Aorta (tissue), 5 donors: ENCODE measurements at regions of chr6 and their contacts with region 1.

Region 1: GRCh38 chr6:3281631-3282475 is 23.1 kb downstream of the PSMG4 start:
- DNase-seq: peak in 1 of 2 donors; percentile 72
- ATAC-seq: no peak
- H3K4me3 ChIP-seq: no peak overlapping the region
- H3K27ac ChIP-seq: peak overlapping the region in 1 of 2 donors; percentile 29
- H3K4me1 ChIP-seq: no peaks in the 10 kb centered on the region
- H3K27me3 ChIP-seq: no peaks in the 10 kb centered on the region

Region 2: GRCh38 chr6:3403238-3404173 is 121.7 kb after region 1 on chr6:
- intact Hi-C with region 1: loop called in 1 of 2 experiments (anchors 10 kb)
- DNase-seq: no peak
- ATAC-seq: no peak
- H3K4me3 ChIP-seq: no peak overlapping the region
- H3K27ac ChIP-seq: no peak overlapping the region
- H3K4me1 ChIP-seq: no peaks in the 10 kb centered on the region
- H3K27me3 ChIP-seq: no peaks in the 10 kb centered on the region

Region 3: GRCh38 chr6:3732345-3733141 is 450.7 kb after region 1 on chr6:
- intact Hi-C with region 1: loop called (anchors 2 to 5 kb)
- DNase-seq: peak; percentile 83 to 88
- ATAC-seq: peak; percentile 84
- H3K4me3 ChIP-seq: no peak overlapping the region
- H3K27ac ChIP-seq: peak overlapping the region in 1 of 2 donors; percentile 34
- H3K4me1 ChIP-seq: no peaks in the 10 kb centered on the region
- H3K27me3 ChIP-seq: no peaks in the 10 kb centered on the region

Region 4: DNA sequence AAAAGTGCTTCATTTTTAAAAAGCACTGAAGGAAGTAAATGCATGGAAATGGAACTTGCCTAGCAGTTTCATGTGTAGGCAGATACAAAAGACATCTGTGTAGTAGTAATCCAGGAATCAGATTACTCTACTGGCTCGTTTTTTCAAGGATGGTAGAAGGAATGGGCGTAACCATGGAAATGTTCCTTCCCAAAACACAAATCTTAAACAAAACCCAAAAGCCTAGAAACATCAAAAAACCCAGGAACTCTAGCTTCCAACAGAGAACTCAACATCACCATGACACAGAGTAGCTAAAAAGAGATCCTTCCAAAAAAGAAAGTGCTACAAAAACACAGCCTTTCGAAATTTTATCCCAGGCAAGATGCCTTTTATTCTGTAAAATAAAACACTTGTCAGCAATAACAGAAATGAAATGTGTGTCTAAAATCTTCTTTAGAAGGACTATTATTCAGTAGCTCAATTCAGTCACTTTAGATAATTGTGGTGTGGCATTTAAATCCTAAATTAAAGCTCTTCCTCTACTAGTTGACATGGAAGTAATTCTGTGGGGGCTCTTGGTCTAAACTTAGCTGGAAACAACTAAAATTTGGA is 715.4 kb after region 1 on chr6:
- intact Hi-C with region 1: loop called (anchors 5 kb)
- DNase-seq: no peak
- ATAC-seq: peak; percentile 41
- H3K4me3 ChIP-seq: no peak overlapping the region
- H3K27ac ChIP-seq: peak overlapping the region in 1 of 2 donors; percentile 43
- H3K4me1 ChIP-seq: peaks cover 0 to 3% of the 10 kb centered on the region in 2 donors
- H3K27me3 ChIP-seq: no peaks in the 10 kb centered on the region

Region 5: DNA sequence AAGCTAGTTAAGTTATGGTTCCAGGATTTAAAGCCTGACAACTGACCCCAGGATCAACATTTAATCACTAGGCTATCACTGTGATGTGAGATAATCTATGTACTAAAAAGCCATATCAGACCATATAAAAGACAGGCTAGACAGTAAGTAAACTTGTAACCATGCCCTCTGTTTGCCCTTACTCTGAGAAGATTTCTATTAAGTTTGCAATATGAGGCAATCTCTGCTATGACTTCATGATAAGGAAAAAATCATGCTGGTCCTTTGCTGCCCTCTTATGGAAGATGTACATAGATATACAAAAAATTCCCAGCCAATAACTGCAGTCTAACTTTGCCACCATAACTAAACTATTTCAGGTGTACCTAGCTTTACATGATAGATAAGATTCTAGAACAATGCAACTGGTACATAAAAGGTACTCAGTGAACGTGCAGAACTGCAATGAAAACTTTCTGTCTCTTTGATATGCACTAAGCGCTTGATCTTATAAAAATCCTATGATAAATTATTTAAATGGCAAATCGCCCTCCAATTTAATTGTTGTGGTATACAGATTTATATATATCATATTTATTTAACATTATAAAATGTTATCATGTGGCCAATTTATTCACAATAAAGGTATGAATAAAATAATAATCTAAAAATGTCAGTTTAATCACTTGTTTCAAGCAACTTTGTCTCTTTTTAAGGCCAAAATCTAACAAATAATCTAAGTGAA is 726.6 kb after region 1 on chr6:
- intact Hi-C with region 1: loop called (anchors 2 to 5 kb)
- DNase-seq: no peak
- ATAC-seq: peak; percentile 86
- H3K4me3 ChIP-seq: no peak overlapping the region
- H3K27ac ChIP-seq: no peak overlapping the region
- H3K4me1 ChIP-seq: no peaks in the 10 kb centered on the region
- H3K27me3 ChIP-seq: no peaks in the 10 kb centered on the region